GM12878 (cell line): ENCODE measurements at regions of chr21 and their contacts with region 1.

Region 1: DNA sequence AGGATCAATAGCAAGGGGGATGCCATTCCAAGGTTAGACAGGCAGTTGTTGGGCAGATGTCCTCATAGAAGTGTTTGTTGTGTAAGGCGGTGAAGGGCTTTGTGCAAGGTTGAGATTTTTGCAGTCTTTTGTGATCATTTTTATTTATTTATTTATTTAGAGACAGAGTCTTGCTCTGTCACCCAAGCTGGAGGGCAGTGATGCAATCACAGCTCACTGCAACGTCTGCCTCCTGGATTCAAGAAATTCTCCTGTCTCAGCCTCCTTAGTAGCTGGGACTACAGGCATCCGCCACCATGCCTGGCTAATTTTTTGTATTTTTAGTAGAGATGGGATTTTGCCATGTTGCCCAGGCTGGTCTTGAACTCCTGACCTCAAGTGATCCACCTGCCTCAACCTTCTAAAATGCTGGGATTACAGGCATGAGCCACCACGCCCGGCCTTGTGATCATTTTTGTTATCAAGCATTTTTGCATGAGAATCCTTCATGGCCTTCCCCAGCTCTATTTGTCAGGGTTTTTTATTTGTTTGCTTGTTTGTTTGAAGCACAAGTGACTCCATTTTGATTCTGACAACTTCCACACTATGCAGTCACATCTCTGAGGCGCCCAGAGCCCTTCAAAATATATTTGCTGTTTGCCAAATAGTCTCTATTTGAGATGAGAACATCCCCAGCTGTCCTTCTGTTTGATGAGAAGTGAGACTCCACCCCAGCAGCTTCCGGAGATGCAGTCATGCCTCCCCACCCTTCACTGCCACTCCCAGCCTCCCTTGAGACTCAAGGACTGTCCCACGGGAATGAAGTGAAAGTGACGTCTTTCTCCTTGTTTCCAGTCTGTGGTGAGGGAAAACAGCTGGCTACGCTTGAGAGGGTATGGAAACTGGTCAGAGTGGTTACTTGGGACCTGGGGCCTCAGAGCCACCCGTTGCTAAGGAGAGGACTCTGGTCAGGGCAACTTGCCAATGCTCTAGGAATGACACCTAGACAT is 38.0 kb downstream of the TMEM50B start:
- DNase-seq: peak; percentile 91
- ATAC-seq: peak; percentile 87
- H3K4me3 ChIP-seq: no peak overlapping the region
- H3K27ac ChIP-seq: peak overlapping the region; percentile 90
- H3K4me1 ChIP-seq: peaks cover 19% of the 10 kb centered on the region
- H3K27me3 ChIP-seq: no peaks in the 10 kb centered on the region
- CTCF ChIP-seq: no peak
- EP300 ChIP-seq: no peak; a peak in 1 of 4 replicates
- POLR2A ChIP-seq: no peak; the same call in 1 of the 2 replicates
- RAD21 ChIP-seq: no peak

Region 2: GRCh38 chr21:32994305-32994704 is 447.5 kb before region 1 on chr21:
- CTCF ChIA-PET with region 1: interaction called, 10 read pairs
- POLR2A ChIA-PET with region 1: no interaction called
- RAD21 ChIA-PET with region 1: no interaction called
- SMC1A ChIA-PET with region 1: no interaction called
- in situ Hi-C with region 1: no loop called
- intact Hi-C with region 1: loop called (anchors 5 kb)
- DNase-seq: no peak
- ATAC-seq: peak; percentile 38; the same call in 1 of the 3 replicates
- H3K4me3 ChIP-seq: no peak overlapping the region
- H3K27ac ChIP-seq: no peak overlapping the region
- H3K4me1 ChIP-seq: no peaks in the 10 kb centered on the region
- H3K27me3 ChIP-seq: peaks cover 0 to 2% of the 10 kb centered on the region in 2 experiments; a peak in 3 of 4 replicates
- CTCF ChIP-seq: peak; percentile 16 to 35 (median 23); a peak in 3 of 6 replicates
- EP300 ChIP-seq: no peak
- POLR2A ChIP-seq: no peak
- RAD21 ChIP-seq: peak; percentile 39; the same call in 1 of the 2 replicates

Region 3: DNA sequence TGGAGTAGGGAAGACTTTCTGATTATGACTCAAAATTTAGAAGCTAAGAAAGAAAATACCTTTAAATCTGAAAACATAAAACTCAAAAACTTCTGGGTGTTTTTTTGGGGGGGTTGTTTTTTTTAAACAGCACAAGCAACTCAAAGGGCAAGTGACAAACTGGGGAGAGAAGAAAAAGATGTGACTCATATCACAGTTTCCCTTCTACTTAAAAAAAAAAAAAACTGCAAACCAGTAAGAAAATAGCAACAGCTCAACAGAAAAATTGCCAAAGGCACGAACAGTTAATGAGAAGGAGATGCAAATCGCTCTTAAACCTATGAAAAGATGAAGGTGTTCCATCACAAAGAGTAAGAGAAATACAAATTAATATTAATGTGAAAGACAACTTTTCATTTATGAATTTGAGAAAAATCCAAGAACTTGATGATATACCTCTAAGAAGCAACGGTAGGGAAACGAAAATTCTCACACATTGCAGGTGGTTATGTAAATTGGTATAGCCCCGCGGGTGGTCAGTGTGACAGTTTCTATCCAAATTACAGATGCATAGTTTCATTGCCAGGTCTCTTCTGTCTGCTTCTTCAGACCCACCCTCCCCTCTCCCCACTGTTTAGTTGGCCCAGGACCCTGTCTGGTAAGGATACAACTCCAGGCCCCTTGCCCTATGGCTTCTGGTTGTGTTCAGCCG is 203.1 kb before region 1 on chr21:
- CTCF ChIA-PET with region 1: interaction called, 5 read pairs
- POLR2A ChIA-PET with region 1: interaction called, 8 read pairs
- RAD21 ChIA-PET with region 1: interaction called, 11 read pairs
- SMC1A ChIA-PET with region 1: interaction called, 10 read pairs
- in situ Hi-C with region 1: no loop called
- intact Hi-C with region 1: no loop called
- DNase-seq: peak; percentile 76
- ATAC-seq: peak; percentile 79
- H3K4me3 ChIP-seq: peak overlapping the region; percentile 66
- H3K27ac ChIP-seq: peak overlapping the region; percentile 86
- H3K4me1 ChIP-seq: peaks cover 56% of the 10 kb centered on the region
- H3K27me3 ChIP-seq: no peaks in the 10 kb centered on the region
- CTCF ChIP-seq: no peak
- EP300 ChIP-seq: peak; percentile 79 to 96
- POLR2A ChIP-seq: 0 out of 2 replicates have a peak, but pooled peaks have one; percentile 40
- RAD21 ChIP-seq: 0 out of 2 replicates have a peak, but pooled peaks have one; percentile 10

Region 4: DNA sequence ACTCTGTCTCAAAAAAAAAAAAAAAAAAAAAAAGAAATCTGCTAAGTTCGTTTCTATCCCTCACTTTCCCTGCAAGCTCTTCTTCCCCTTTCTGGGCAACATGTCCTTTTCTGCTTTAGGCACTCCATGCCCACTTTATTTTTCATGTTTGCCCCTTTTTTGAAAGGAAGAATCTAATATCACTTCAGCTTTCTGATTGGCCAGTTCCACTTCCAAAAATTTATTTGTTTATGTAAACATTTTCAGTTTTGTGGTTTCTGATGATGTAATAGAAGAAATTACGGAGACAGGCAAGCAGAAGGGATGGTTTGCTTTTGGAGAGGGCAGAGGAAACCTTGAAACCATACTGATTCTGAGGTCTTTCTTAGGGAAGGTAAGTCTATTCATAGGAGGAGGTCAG is 101.9 kb before region 1 on chr21:
- CTCF ChIA-PET with region 1: interaction called, 14 read pairs
- POLR2A ChIA-PET with region 1: no interaction called
- RAD21 ChIA-PET with region 1: interaction called, 4 read pairs
- SMC1A ChIA-PET with region 1: interaction called, 7 read pairs
- in situ Hi-C with region 1: no loop called
- intact Hi-C with region 1: no loop called
- DNase-seq: no peak
- ATAC-seq: peak; percentile 31; the same call in 2 of the 3 replicates
- H3K4me3 ChIP-seq: no peak overlapping the region
- H3K27ac ChIP-seq: peak overlapping the region; percentile 61
- H3K4me1 ChIP-seq: peaks cover 21% of the 10 kb centered on the region
- H3K27me3 ChIP-seq: no peaks in the 10 kb centered on the region
- CTCF ChIP-seq: no peak
- EP300 ChIP-seq: no peak
- POLR2A ChIP-seq: no peak
- RAD21 ChIP-seq: no peak

Region 5: GRCh38 chr21:33367309-33367973 is 74.3 kb before region 1 on chr21:
- CTCF ChIA-PET with region 1: interaction called, 182 read pairs
- POLR2A ChIA-PET with region 1: interaction called, 5 read pairs
- RAD21 ChIA-PET with region 1: interaction called, 128 read pairs
- SMC1A ChIA-PET with region 1: interaction called, 133 read pairs
- in situ Hi-C with region 1: no loop called
- intact Hi-C with region 1: no loop called
- DNase-seq: no peak
- ATAC-seq: no peak
- H3K4me3 ChIP-seq: no peak overlapping the region
- H3K27ac ChIP-seq: no peak overlapping the region
- H3K4me1 ChIP-seq: peaks cover 5% of the 10 kb centered on the region; the same call in 1 of the 2 replicates
- H3K27me3 ChIP-seq: no peaks in the 10 kb centered on the region
- CTCF ChIP-seq: no peak
- EP300 ChIP-seq: no peak
- POLR2A ChIP-seq: no peak
- RAD21 ChIP-seq: no peak

Region 6: GRCh38 chr21:33403779-33404585 is 37.8 kb before region 1 on chr21:
- CTCF ChIA-PET with region 1: interaction called, 14 read pairs
- POLR2A ChIA-PET with region 1: interaction called, 27 read pairs
- RAD21 ChIA-PET with region 1: interaction called, 53 read pairs
- SMC1A ChIA-PET with region 1: interaction called, 42 read pairs
- in situ Hi-C with region 1: no loop called
- intact Hi-C with region 1: loop called (anchors 2 kb)
- DNase-seq: no peak
- ATAC-seq: peak; percentile 60
- H3K4me3 ChIP-seq: peak overlapping the region; percentile 84
- H3K27ac ChIP-seq: peak overlapping the region; percentile 97
- H3K4me1 ChIP-seq: peaks cover 15% of the 10 kb centered on the region
- H3K27me3 ChIP-seq: no peaks in the 10 kb centered on the region
- CTCF ChIP-seq: no peak
- EP300 ChIP-seq: no peak
- POLR2A ChIP-seq: peak; percentile 77
- RAD21 ChIP-seq: no peak

Region 7: DNA sequence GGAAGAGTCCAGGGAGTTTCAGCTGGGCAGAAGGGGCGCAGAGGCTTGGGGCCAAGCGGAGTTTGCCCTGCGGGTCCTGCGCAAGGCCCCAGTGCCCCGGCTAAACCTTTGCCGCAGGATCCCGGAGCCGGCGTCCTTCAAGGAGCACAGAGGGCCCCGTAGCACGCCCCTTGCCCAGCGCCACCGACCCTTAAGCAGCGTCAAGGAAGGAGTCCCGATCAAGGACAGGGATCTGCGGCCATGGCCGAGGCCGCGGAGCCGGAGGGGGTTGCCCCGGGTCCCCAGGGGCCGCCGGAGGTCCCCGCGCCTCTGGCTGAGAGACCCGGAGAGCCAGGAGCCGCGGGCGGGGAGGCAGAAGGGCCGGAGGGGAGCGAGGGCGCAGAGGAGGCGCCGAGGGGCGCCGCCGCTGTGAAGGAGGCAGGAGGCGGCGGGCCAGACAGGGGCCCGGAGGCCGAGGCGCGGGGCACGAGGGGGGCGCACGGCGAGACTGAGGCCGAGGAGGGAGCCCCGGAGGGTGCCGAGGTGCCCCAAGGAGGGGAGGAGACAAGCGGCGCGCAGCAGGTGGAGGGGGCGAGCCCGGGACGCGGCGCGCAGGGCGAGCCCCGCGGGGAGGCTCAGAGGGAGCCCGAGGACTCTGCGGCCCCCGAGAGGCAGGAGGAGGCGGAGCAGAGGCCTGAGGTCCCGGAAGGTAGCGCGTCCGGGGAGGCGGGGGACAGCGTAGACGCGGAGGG is 1227.5 kb after region 1 on chr21:
- CTCF ChIA-PET with region 1: no interaction called
- POLR2A ChIA-PET with region 1: no interaction called
- RAD21 ChIA-PET with region 1: no interaction called
- SMC1A ChIA-PET with region 1: no interaction called
- in situ Hi-C with region 1: no loop called
- intact Hi-C with region 1: no loop called
- DNase-seq: no peak
- ATAC-seq: peak; percentile 80
- H3K4me3 ChIP-seq: peak overlapping the region; percentile 91
- H3K27ac ChIP-seq: peak overlapping the region; percentile 58
- H3K4me1 ChIP-seq: peaks cover 18% of the 10 kb centered on the region
- H3K27me3 ChIP-seq: no peaks in the 10 kb centered on the region; a peak in 1 of 4 replicates
- CTCF ChIP-seq: no peak
- EP300 ChIP-seq: no peak
- POLR2A ChIP-seq: peak; percentile 71
- RAD21 ChIP-seq: no peak